ENCODE measurements at regions of chr1 and their contacts with region 1.

Region 1: GRCh38 chr1:234628089-234628488 is 18.1 kb upstream of the IRF2BP2 start:
- DNase-seq: no peak
- ATAC-seq: no peak
- H3K4me3 ChIP-seq: no peak overlapping the region
- H3K4me3 Mint-ChIP-seq: no peak overlapping the region
- H3K27ac ChIP-seq: no peak overlapping the region
- H3K27ac Mint-ChIP-seq: no peak overlapping the region
- H3K4me1 ChIP-seq: no peaks in the 10 kb centered on the region
- H3K4me1 Mint-ChIP-seq: peaks cover 0 to 3% (median 0%) of the 10 kb centered on the region in 7 donors
- H3K27me3 ChIP-seq: no peaks in the 10 kb centered on the region
- H3K27me3 Mint-ChIP-seq: peaks cover 0 to 4% (median 0%) of the 10 kb centered on the region in 5 donors

Region 2: DNA sequence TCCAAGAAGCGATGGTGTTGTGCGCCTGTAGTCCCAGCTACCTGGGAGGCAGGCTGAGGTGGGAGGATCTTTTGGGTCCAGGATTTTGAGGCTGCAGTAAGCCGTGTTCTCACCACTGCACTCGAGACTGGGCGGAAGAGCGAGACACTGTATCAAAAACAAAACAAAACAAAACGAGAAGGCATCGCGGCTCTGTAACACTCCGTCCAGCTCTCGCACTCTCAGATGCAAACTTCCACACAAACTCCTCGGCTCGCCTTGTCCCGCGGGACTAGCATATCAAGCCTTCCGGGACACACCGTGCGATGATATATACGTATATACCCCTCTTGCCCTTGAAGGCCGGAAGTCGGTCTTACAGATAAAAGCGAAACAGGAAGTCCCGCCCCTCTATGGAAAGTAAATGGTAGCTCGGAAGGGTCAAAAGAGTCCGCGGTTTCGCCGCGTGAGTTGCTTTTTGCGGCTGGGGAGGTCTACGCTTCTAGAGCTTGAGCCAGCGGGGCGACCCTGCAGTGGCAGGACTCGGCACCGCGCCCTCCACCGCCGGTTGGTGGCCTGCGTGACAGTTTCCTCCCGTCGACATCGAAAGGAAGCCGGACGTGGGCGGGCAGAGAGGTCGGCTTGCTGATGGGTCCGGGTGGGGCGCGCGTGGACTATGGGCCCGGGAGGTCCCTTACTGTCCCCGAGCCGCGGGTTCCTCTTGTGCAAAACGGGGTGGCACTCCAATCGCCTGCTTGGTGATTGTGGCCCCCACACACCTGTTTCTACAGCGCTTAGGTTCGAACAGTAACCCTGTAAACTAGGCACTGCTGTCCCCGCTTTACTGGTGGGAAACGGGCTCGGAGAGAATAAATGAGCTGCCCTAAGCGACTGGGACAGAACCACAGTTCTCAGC is 254.8 kb before region 1 on chr1 and contains the start of gene COA6:
- CTCF ChIA-PET with region 1: no interaction called
- POLR2A ChIA-PET with region 1: no interaction called
- intact Hi-C with region 1: no loop called
- DNase-seq: peak; percentile 76 to 92 (median 90)
- ATAC-seq: peak; percentile 91
- H3K4me3 ChIP-seq: peak within 1 kb of the TSS; percentile 73
- H3K4me3 Mint-ChIP-seq: peak within 1 kb of the TSS; percentile 93 to 100 (median 97)
- H3K27ac ChIP-seq: peak within 1 kb of the TSS; percentile 95
- H3K27ac Mint-ChIP-seq: peak within 1 kb of the TSS; percentile 97 to 100 (median 99)
- H3K4me1 ChIP-seq: peaks cover 12 to 16% of the 10 kb centered on the region in 2 donors
- H3K4me1 Mint-ChIP-seq: peaks cover 30 to 66% (median 63%) of the 10 kb centered on the region in 7 donors
- H3K27me3 ChIP-seq: no peaks in the 10 kb centered on the region
- H3K27me3 Mint-ChIP-seq: no peaks in the 10 kb centered on the region
- total RNA-seq, gene COA6: 9.5 to 47.3 (median 18.5) TPM

Region 3: GRCh38 chr1:234709473-234710228 is 81.6 kb after region 1 on chr1:
- CTCF ChIA-PET with region 1: no interaction called
- POLR2A ChIA-PET with region 1: no interaction called
- intact Hi-C with region 1: loop called in 1 of 2 experiments (anchors 5 kb)
- DNase-seq: no peak
- ATAC-seq: peak; percentile 37
- H3K4me3 ChIP-seq: no peak overlapping the region
- H3K4me3 Mint-ChIP-seq: no peak overlapping the region
- H3K27ac ChIP-seq: no peak overlapping the region
- H3K27ac Mint-ChIP-seq: no peak overlapping the region
- H3K4me1 ChIP-seq: peaks cover 0 to 9% of the 10 kb centered on the region in 2 donors
- H3K4me1 Mint-ChIP-seq: peaks cover 13 to 32% (median 16%) of the 10 kb centered on the region in 7 donors
- H3K27me3 ChIP-seq: no peaks in the 10 kb centered on the region
- H3K27me3 Mint-ChIP-seq: no peaks in the 10 kb centered on the region

Measured in naive thymus-derived CD4-positive, alpha-beta T cell (primary cell).